WTC11 (cell line): ENCODE measurements at regions of chr2 and their contacts with region 1.

Region 1: GRCh38 chr2:6896930-6897759 is 19.6 kb downstream of the RSAD2 start:
- DNase-seq: no peak
- ATAC-seq: no peak
- H3K4me3 Mint-ChIP-seq: no peak overlapping the region
- H3K27ac Mint-ChIP-seq: no peak overlapping the region
- H3K4me1 Mint-ChIP-seq: no peaks in the 10 kb centered on the region
- H3K27me3 Mint-ChIP-seq: peaks cover 10% of the 10 kb centered on the region
- CTCF ChIP-seq: peak; percentile 37; the same call in 1 of the 2 replicates

Region 2: GRCh38 chr2:6168485-6168884 is 728.7 kb before region 1 on chr2:
- CTCF ChIA-PET with region 1: no interaction called
- POLR2A ChIA-PET with region 1: no interaction called
- DNase-seq: no peak
- ATAC-seq: no peak
- H3K4me3 Mint-ChIP-seq: no peak overlapping the region
- H3K27ac Mint-ChIP-seq: no peak overlapping the region
- H3K4me1 Mint-ChIP-seq: no peaks in the 10 kb centered on the region
- H3K27me3 Mint-ChIP-seq: peaks cover 9% of the 10 kb centered on the region
- CTCF ChIP-seq: no peak

Region 3: GRCh38 chr2:6826081-6826913 is 70.8 kb before region 1 on chr2:
- CTCF ChIA-PET with region 1: no interaction called
- POLR2A ChIA-PET with region 1: no interaction called
- DNase-seq: peak; percentile 23
- ATAC-seq: peak; percentile 71
- H3K4me3 Mint-ChIP-seq: no peak overlapping the region
- H3K27ac Mint-ChIP-seq: no peak overlapping the region
- H3K4me1 Mint-ChIP-seq: no peaks in the 10 kb centered on the region
- H3K27me3 Mint-ChIP-seq: peaks cover 14% of the 10 kb centered on the region
- CTCF ChIP-seq: peak; percentile 54

Region 4: DNA sequence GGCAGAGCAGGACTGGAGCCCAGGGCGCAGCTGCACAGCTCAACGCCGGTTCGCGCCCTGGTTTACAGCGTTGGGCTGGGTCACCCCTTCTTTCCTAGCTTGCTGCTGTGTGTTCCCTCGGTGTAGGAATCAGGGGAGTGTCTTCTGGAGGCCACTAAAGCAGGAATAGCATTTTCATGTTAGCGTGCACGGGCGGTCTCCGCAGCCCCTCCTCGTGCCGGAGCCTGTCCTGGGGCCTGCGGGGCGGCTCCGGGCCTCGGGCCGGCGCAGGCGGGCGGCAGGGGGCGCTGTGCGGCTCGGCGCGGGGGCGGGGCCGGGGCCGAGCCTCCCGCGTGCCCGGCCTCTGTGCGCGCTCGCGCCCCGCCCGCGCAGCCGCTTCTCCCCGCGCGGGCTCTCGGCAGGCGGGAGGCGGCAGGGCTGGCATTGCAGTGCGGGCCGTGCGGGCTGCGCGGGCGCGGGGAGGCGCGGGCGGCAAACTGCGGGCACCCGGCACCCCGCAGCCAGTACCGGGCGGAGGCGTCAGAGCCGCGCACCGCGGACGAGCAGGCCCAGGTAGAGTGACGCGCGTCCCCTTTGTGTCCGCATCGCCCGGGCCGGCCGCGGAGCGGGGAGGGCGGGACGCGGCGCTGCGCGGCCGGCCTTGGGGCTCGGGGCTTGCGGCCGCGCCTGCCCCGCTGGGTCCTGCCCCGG is 20.1 kb after region 1 on chr2 and contains the start of gene RNF144A:
- CTCF ChIA-PET with region 1: interaction called, 12 read pairs
- POLR2A ChIA-PET with region 1: no interaction called
- DNase-seq: peak; percentile 62
- ATAC-seq: peak; percentile 72
- H3K4me3 Mint-ChIP-seq: peak within 1 kb of the TSS; percentile 67
- H3K27ac Mint-ChIP-seq: no peak within 1 kb of the TSS
- H3K4me1 Mint-ChIP-seq: peaks cover 38% of the 10 kb centered on the region
- H3K27me3 Mint-ChIP-seq: peaks cover 28% of the 10 kb centered on the region
- CTCF ChIP-seq: peak; percentile 20; the same call in 1 of the 2 replicates
- total RNA-seq, gene RNF144A: 12.5 to 13.6 TPM (median 12.8 TPM) in 3 replicates

Region 5: DNA sequence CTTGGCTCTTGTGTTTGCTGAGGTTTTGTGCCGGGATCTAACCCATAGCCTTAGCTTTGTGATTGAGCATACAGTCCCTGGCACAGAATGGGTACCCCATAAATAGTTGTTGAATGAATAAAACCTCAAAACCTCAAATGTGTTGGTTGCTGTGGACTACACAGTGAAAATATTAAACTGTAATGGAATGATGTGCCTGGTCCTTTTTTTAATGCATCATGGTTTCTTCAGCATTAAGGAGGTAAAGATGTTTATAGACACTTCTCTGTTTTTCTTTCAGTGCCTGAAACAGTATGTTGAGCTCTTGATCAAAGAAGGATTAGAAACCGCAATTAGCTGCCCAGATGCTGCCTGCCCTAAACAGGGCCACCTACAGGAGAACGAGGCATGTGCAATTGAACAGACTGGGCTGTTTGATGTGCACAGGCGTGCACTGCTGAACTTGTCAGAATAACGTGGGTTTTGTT is 117.1 kb after region 1 on chr2:
- CTCF ChIA-PET with region 1: interaction called, 13 read pairs
- POLR2A ChIA-PET with region 1: no interaction called
- DNase-seq: peak; percentile 32
- ATAC-seq: peak; percentile 75
- H3K4me3 Mint-ChIP-seq: no peak overlapping the region
- H3K27ac Mint-ChIP-seq: no peak overlapping the region
- H3K4me1 Mint-ChIP-seq: peaks cover 11% of the 10 kb centered on the region
- H3K27me3 Mint-ChIP-seq: no peaks in the 10 kb centered on the region
- CTCF ChIP-seq: 0 out of 2 replicates have a peak, but pooled peaks have one; percentile 21

Region 6: DNA sequence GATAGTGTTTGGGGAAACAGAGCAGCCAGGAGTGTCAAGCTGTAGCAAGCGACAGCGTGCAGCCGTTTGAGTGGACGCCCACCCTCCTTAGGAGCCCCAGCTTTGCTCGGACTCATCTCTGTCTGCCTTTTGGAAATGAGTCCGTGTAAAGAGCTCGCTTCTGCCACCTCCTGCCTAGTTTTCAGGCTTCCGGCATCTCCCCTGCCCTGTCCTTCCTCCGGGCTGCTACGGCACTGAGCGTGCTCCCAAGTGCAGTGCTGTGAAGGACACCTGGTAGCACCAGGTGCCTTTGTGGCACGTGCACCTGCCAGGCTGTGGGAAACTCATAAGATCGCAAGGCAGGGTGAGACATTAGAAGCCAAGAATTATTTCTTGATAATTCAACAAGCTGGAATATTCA is 137.2 kb after region 1 on chr2:
- CTCF ChIA-PET with region 1: interaction called, 17 read pairs
- POLR2A ChIA-PET with region 1: no interaction called
- DNase-seq: peak; percentile 41
- ATAC-seq: peak; percentile 75
- H3K4me3 Mint-ChIP-seq: no peak overlapping the region
- H3K27ac Mint-ChIP-seq: no peak overlapping the region
- H3K4me1 Mint-ChIP-seq: no peaks in the 10 kb centered on the region
- H3K27me3 Mint-ChIP-seq: no peaks in the 10 kb centered on the region
- CTCF ChIP-seq: no peak

Region 7: DNA sequence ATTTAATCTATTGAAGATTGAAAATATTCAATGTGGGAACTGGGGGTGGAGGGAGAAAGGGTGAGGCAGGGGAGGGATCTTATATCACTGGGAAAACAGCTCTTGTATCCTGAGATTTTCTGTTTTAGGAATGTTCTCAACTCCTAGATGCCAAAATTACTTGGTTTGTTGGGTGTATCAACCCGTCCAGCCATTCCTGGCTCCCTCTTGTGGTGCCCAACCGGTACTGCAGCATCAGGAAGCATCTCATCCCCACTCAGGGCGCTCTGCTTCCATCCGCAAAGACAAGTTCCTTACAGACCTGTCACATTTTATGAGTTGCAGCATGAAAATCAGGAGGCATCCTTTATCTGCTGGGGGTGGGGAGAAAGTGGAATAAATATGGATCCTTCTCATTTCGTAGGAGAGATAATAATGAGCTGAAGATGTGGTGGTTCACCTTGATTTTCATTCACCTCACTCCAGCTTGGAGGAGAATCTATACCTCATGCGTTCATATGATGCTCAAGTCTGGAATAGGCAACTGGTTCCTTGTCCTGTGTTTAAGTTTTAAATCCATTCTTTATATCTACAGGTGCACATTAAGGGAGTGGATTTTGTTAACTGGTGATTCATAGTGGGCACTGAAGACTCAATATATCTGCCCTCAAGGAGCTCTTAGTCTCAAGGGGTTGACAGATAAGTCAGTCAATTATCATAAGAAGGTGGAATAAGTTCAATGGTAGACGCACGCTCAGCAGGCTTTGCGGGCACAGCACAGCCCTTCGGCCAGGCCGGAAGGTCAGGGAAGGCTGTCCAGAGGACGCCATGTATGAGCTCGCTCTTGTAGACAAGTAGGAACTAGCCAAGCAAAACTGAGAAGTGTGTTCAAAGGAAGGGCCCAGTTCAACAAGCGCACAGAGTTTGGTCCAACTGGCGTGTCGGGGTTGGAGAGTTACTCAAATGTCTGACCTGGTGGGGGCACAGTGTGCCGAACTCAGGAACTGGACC is 147.4 kb after region 1 on chr2:
- CTCF ChIA-PET with region 1: interaction called, 10 read pairs
- POLR2A ChIA-PET with region 1: no interaction called
- DNase-seq: peak; percentile 67
- ATAC-seq: peak; percentile 85
- H3K4me3 Mint-ChIP-seq: no peak overlapping the region
- H3K27ac Mint-ChIP-seq: no peak overlapping the region
- H3K4me1 Mint-ChIP-seq: peaks cover 13% of the 10 kb centered on the region
- H3K27me3 Mint-ChIP-seq: no peaks in the 10 kb centered on the region
- CTCF ChIP-seq: peak; percentile 98